Activated CD8-positive, alpha-beta T cell treated with anti-CD3 and anti-CD28 coated beads, Interleukin-2, amount 10 ng/mL, durations not matched to agents 7 days and 5 days (primary cell): ENCODE measurements at regions of chr18 and their contacts with region 1.

Region 1: DNA sequence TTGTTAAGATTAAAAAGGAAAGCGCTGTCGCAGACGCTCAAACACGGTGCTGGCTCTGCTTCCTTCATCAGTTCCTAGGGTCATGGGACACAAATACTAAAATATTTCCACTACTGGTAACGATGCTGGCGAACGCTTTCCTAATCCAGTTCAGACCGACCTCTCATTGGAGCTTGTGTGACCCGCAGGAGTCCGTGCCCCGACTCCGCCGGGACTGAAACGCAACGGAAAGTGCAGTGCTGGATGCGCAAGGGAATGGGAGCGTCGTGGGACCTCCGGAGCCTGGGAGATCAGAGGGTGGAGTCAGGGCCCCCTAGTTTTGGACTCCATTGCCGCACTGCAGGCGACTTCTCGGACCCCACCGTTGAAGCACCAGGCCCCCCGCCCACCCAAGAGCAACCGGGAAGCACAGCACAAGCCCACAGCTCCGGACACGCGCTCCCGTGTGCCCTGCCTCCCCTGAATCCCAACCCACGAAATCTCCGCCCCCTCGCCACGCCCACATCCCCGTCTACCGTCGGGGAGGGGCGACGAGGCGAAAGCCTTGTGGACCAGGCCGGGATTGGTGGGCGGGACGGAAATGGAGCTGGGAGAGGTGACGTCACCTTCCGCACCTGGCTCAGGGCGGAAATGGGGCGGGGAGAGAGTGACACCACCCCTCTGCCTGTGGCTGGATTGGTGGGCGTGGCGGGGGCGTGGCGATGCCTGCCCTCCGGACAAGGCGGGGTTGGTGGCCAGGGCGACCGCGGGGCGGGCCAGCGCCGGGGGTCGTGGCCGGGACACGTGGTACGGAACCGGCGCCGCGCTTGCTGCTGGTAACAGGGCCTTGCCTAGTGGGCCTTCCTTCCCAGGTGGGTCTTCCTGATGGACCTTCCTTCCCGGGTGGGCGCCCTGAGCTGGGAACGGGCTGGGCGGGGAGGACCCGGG is at the start of gene CNDP2:
- DNase-seq: peak; percentile 99
- ATAC-seq: peak; percentile 72
- H3K4me3 Mint-ChIP-seq: peak within 1 kb of the TSS; percentile 83
- H3K27ac Mint-ChIP-seq: peak within 1 kb of the TSS; percentile 100
- H3K4me1 Mint-ChIP-seq: peaks cover 47% of the 10 kb centered on the region
- H3K27me3 Mint-ChIP-seq: peaks cover 8% of the 10 kb centered on the region
- total RNA-seq, gene CNDP2: 131 to 144 TPM

Region 2: DNA sequence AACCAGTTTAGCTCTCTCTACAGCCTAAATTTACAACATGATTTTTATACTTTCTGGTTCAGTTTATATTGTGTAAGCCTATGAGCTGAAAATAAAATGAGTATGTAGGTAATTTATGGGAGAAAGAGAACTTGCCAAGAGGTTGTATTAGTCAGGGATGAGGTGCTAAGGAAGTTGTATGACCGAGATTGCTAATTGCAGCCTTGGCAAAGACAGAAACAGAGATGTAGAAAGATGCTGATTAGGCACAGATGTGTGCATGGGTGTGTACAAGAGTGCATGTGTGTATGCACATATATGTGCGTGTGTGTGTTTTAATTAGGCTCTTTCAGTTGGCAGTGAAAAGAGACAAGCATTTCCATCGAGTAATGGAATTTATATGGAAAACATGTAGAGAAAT is 562.2 kb before region 1 on chr18:
- CTCF ChIA-PET with region 1: no interaction called
- POLR2A ChIA-PET with region 1: no interaction called
- DNase-seq: no peak
- ATAC-seq: no peak
- H3K4me3 Mint-ChIP-seq: no peak overlapping the region
- H3K27ac Mint-ChIP-seq: no peak overlapping the region
- H3K4me1 Mint-ChIP-seq: no peaks in the 10 kb centered on the region
- H3K27me3 Mint-ChIP-seq: no peaks in the 10 kb centered on the region

Region 3: DNA sequence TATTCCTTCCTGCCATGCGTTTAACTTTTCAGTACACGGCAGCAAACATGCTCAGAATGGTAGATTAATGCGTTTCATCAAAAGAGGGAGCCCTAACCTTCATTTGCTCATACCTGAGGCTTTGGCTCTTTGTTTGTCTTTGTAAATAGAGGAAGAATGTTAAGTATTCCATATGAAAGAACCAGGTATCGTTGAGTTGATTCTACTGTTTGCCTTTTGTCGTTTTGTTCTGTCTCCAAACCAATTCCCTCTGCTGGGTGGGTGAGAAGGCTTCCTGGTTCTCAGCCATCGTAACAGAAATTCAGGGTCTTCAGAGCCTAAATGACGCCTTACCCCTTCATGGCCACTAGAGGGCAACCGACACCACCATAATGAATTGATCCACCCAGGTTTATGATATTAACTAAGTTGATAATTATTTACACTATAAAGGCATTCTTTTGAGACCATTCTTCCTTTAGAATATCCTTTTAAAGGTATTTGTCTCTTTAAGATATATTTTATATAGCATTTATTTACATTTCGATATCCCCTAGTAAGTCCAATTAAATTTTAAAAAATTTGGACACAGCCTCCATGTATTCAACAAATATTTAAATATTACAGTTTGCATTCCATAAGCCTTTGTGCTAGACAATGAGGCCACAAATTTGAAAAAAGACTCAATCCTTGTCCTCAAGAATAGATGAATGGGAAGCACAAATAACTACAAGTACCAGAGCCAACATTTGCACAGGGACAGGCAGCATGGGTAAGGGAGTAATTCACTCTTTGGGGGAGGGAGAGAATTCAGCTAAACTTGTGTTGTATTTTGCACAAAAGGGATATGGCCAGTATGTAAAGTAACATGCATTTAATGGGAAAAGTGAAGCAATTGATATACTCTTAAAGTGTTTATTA is 299.4 kb before region 1 on chr18:
- CTCF ChIA-PET with region 1: interaction called, 17 read pairs
- POLR2A ChIA-PET with region 1: no interaction called
- DNase-seq: peak; percentile 67
- ATAC-seq: peak; percentile 92
- H3K4me3 Mint-ChIP-seq: peak overlapping the region; percentile 53
- H3K27ac Mint-ChIP-seq: no peak overlapping the region
- H3K4me1 Mint-ChIP-seq: peaks cover 6% of the 10 kb centered on the region
- H3K27me3 Mint-ChIP-seq: peaks cover 11% of the 10 kb centered on the region

Region 4: DNA sequence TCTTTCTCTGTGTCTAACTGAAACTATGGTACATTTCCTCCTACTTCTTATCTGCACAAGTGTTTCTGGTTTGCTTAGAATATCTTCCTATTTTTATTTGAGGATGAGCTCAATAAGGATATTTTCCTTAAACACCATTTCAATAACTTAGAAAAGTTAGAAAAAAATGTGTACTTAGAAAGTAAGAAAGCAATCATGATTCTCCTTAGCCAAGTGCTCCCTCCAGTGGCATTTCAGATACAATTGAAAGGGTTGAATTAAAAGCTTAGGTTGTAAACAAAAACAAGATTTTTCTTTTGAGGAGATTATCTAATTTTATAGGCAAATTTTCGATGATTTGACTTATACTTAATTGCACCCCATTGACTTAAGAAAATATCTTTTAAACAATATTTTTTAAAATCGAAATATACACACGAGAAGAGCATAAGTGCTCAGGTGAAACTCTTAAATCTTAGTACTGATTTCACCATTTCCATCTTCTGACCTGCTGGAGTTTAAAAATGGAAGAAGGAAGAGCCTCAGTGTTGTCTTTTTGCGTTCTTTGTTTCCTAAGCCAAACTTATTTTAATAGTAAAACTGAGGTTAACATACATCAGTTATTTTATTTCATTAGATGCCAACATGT is 153.3 kb before region 1 on chr18:
- CTCF ChIA-PET with region 1: interaction called, 359 read pairs
- POLR2A ChIA-PET with region 1: no interaction called
- DNase-seq: peak; percentile 58
- ATAC-seq: no peak
- H3K4me3 Mint-ChIP-seq: no peak overlapping the region
- H3K27ac Mint-ChIP-seq: no peak overlapping the region
- H3K4me1 Mint-ChIP-seq: no peaks in the 10 kb centered on the region
- H3K27me3 Mint-ChIP-seq: peaks cover 27% of the 10 kb centered on the region

Region 5: GRCh38 chr18:74370115-74370514 is 125.7 kb before region 1 on chr18:
- CTCF ChIA-PET with region 1: interaction called, 30 read pairs
- POLR2A ChIA-PET with region 1: interaction called, 10 read pairs
- DNase-seq: peak; percentile 21
- ATAC-seq: no peak
- H3K4me3 Mint-ChIP-seq: no peak overlapping the region
- H3K27ac Mint-ChIP-seq: no peak overlapping the region
- H3K4me1 Mint-ChIP-seq: peaks cover 54% of the 10 kb centered on the region
- H3K27me3 Mint-ChIP-seq: peaks cover 10% of the 10 kb centered on the region

Region 6: DNA sequence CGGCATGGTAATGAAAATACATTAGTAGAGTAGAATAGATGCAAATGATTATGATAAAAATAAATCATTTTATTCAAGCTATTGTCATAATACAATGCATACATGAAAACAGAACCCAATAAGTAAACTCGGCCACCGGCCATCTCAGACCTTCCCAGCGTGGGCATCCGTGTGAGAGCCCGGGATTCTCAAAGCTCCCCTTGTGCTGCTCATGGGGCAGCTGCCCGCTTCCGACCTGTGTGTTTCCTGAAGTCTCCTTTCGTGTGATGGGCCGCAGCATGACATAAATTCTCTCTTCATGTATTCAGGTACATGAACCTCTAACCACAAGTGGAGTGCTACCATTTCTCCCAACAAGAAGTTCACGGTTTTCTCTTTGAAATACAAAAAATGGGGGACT is 13.1 kb before region 1 on chr18:
- CTCF ChIA-PET with region 1: interaction called, 13 read pairs
- POLR2A ChIA-PET with region 1: interaction called, 4 read pairs
- DNase-seq: no peak
- ATAC-seq: no peak
- H3K4me3 Mint-ChIP-seq: no peak overlapping the region
- H3K27ac Mint-ChIP-seq: no peak overlapping the region
- H3K4me1 Mint-ChIP-seq: peaks cover 18% of the 10 kb centered on the region
- H3K27me3 Mint-ChIP-seq: peaks cover 3% of the 10 kb centered on the region

Region 7: DNA sequence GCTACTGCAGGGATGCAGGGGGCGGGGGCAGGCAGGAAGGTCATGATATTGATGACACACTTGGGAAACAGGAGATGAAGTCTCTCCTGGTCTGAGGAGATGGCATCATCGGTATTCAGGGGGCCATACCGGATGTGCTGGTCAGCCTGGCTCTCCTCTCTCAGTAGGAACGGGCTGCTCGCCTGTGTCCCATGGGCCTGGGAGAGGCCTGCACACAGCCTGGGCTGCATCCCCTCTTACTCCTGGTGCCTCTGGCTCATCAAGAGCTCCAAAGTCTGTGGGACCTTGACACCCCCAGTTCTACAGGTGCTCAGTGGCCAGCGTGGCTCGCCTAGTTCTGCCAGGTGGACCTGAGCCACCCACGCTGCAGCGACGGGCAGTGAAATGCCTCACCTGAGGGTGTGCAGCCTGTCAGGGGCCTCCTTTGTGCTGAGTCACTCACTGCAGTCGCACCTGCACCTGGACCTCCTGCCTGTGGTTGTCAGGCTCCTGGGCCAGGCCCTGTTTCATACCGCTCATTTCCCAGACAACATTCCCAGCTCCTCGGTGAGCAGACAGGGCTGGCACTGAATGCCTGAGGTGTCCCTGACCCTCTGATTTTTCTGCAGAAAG is 19.9 kb after region 1 on chr18:
- CTCF ChIA-PET with region 1: no interaction called
- POLR2A ChIA-PET with region 1: no interaction called
- DNase-seq: no peak
- ATAC-seq: no peak
- H3K4me3 Mint-ChIP-seq: no peak overlapping the region
- H3K27ac Mint-ChIP-seq: no peak overlapping the region
- H3K4me1 Mint-ChIP-seq: no peaks in the 10 kb centered on the region
- H3K27me3 Mint-ChIP-seq: no peaks in the 10 kb centered on the region